Ascending aorta (tissue), 2 donors: ENCODE measurements at regions of chr2 and their contacts with region 1.

Region 1: DNA sequence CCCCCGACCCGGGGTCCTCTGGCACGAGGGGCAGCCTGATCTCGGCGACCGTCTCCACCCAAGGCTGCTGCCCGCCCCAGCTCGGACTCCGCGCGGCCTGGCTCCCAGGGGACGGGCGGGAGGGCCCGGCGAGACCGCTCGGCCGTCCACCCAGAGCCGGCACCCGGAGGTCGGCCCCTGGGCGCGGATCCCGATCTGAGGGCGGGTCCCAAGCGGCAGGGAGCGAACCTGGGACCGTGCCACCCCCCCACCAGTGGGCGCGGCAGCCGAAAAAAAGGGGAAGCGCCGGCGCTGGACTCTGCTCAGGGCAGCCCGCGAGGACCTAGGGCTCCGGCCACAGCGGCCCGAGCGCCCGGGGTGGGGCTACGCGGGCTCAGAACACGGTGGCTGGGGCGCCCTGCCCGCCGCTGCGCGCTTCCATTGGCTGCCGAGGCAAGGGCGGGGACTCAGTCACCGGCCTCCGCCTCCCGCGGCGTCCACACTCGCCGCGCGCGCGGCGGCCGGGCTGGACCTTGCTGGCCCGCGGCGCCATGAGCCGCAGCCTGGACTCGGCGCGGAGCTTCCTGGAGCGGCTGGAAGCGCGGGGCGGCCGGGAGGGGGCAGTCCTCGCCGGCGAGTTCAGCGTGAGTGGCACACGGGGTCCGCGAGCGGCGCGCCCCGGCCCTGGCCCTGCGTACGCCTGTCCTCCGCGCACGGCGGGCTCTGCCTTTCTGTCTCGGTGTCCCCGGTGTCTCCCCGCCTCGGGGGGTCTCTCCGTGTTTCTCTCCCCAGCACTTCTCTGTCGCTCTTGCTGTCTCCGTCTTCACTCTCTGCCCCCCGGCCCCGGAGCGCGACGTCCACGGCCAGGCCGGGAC is at the start of gene PTPN18:
- DNase-seq: peak; percentile 53 to 95
- H3K4me3 ChIP-seq: peak within 1 kb of the TSS; percentile 57 to 78
- H3K27ac ChIP-seq: peak within 1 kb of the TSS; percentile 58 to 74
- H3K4me1 ChIP-seq: peaks cover 6 to 15% of the 10 kb centered on the region in 2 donors
- H3K27me3 ChIP-seq: no peaks in the 10 kb centered on the region
- CTCF ChIP-seq: peak; percentile 43 to 79 (median 59)
- total RNA-seq, gene PTPN18: 21.0 TPM

Region 2: GRCh38 chr2:129877289-129877779 is 478.5 kb before region 1 on chr2:
- intact Hi-C with region 1: loop called (anchors 5 kb)
- DNase-seq: peak; percentile 81 to 95
- H3K4me3 ChIP-seq: peak overlapping the region; percentile 82 to 86
- H3K27ac ChIP-seq: peak overlapping the region; percentile 75 to 80
- H3K4me1 ChIP-seq: peaks cover 0 to 11% of the 10 kb centered on the region in 2 donors
- H3K27me3 ChIP-seq: no peaks in the 10 kb centered on the region
- CTCF ChIP-seq: no peak

Region 3: DNA sequence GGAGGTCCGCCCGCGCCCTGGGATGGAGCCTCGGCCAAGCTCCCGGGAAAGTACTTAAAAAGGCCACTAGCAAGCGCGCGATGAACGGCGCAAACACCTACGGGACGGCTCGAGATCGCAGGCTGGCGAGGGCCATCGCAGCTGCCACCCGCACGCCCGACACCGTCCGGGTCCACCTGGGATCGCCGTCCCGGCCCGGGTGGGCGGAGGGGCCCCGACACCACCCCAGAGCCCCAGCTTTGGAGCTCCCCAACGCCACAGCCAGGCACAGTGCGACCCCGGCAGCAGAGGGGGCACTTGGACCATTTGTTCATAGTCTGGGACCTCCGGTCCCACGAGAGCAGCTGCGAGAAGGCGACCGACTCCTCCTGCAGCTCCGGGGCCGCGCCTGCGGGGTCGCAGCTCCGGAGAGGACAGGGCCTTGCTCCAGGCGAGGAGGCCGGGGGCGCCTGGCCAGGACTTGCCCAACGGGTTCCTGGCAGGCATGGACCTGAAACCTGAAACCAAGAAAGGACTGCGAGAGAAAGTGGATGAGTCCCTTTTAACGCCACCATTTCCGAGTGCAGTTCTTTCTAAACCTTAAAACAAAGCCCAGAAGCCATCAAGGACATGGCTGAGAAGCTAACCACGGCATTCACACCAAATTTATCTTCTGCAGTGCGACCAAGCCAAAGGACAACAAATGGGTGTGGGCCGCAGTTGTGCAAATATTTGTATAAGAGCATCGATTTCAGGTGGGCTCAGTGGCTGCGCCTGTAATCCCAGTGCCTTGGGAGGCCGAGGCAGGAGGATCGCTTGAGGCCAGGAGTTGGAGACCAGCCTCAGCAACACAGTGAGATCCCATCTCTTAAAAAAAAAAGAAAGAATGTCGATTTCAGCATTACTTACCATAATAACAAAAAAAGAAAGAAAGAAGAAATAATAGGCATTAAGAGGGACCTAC is 67.1 kb before region 1 on chr2:
- intact Hi-C with region 1: no loop called
- DNase-seq: no peak
- H3K4me3 ChIP-seq: no peak overlapping the region
- H3K27ac ChIP-seq: no peak overlapping the region
- H3K4me1 ChIP-seq: no peaks in the 10 kb centered on the region
- H3K27me3 ChIP-seq: no peaks in the 10 kb centered on the region
- CTCF ChIP-seq: no peak

Region 4: GRCh38 chr2:130372055-130372832 is 16.4 kb after region 1 on chr2:
- intact Hi-C with region 1: loop called (anchors 1 kb)
- DNase-seq: peak; percentile 38 to 94
- H3K4me3 ChIP-seq: peak overlapping the region; percentile 82 to 94
- H3K27ac ChIP-seq: peak overlapping the region; percentile 73 to 89
- H3K4me1 ChIP-seq: peaks cover 0 to 16% of the 10 kb centered on the region in 2 donors
- H3K27me3 ChIP-seq: no peaks in the 10 kb centered on the region
- CTCF ChIP-seq: peak; percentile 86 to 93 (median 87)

Region 5: GRCh38 chr2:130727286-130728018 is 371.6 kb after region 1 on chr2:
- intact Hi-C with region 1: loop called (anchors 5 kb)
- DNase-seq: peak; percentile 46 to 91
- H3K4me3 ChIP-seq: peak overlapping the region; percentile 64 to 67
- H3K27ac ChIP-seq: peak overlapping the region; percentile 73 to 86
- H3K4me1 ChIP-seq: peaks cover 7 to 15% of the 10 kb centered on the region in 2 donors
- H3K27me3 ChIP-seq: no peaks in the 10 kb centered on the region
- CTCF ChIP-seq: no peak

Region 6: DNA sequence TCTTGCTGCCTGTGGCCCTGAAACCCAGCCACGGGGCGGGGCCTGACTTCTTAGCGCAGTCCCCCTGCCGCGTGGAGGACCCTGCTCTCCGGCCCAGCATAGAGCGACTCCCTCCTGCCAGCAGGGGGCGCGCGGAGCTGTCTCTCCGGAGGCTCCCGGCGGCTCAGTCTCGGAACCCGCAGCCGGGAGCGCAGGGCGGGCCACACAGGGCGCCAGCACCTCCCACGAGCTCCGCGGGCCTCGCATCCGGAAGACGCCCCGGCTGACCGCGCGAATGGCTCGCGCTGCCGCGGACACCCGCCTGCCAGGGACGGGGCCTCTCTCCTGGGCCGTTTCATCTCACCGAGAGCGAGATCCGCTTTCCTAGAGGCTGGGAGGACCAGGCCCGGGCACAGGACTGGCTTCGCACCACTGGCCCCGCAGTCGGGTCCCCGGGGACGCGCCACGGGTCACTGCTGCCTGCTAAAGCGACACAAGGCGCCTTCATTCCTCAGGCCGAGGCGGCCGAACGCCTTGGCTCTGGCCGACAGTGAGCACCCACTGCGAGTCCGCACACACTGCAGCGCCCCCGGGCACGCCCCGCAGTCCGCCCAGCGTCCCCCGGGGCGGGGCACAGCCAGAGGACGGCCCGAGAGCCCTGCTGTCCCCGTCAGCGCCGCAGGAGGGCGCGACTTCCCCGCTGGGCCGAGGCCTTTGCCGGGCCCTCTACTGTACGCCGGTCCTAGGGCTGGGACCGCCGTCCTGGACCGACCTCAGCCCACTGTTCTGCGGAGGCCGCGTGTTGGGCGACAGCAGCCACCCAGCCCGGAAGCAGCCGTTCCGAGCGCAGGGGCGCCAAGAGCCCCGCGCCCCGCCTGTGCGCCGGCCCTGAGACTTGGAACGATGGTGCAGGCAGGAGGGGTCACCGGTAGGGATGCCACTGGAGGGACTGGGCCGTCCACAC is 442.0 kb after region 1 on chr2:
- intact Hi-C with region 1: loop called (anchors 10 kb)
- DNase-seq: peak; percentile 39 to 93
- H3K4me3 ChIP-seq: peak overlapping the region; percentile 59 to 70
- H3K27ac ChIP-seq: peak overlapping the region; percentile 88 to 90
- H3K4me1 ChIP-seq: peaks cover 0 to 8% of the 10 kb centered on the region in 2 donors
- H3K27me3 ChIP-seq: no peaks in the 10 kb centered on the region
- CTCF ChIP-seq: peak; percentile 86 to 96 (median 95)

Region 7: DNA sequence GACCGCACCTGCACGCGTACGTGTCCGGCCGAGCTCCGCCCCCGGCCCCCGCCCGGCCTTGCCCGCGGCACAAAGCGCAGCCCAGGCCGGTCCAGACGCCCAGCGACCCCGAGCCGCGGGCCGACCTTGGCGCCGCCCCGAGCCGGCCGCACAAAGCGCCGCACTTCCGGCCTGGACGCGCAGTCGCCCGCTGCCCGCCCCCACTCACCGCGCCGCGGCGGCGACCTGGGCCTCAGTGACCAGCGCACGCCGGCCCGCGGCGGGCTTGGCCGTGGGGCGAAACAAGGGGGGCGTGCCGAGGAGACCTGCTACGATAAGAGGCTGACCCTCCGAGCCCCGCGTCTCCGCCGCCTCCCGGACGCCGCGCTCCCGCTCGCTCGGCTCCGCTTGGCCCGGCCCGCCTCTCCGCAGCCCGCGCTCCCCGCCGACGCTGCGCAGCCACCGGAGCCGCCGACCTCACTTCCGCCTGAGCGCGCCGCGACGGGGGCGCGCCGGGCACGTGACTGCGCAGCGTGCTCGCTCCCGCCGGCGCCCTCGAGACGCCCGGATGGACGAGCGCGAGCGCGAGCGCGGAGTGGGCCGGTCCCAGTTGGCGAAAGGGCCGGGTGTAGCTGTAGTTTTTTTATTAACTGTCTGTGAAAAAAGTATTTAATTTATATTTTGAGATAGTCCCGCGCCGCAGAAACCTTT is 737.3 kb after region 1 on chr2 and contains the start of gene FAM168B:
- intact Hi-C with region 1: loop called (anchors 5 kb)
- DNase-seq: peak; percentile 47 to 91
- H3K4me3 ChIP-seq: peak within 1 kb of the TSS; percentile 88 to 98
- H3K27ac ChIP-seq: peak within 1 kb of the TSS; percentile 88 to 98
- H3K4me1 ChIP-seq: peaks cover 0 to 15% of the 10 kb centered on the region in 2 donors
- H3K27me3 ChIP-seq: no peaks in the 10 kb centered on the region
- CTCF ChIP-seq: no peak
- total RNA-seq, gene FAM168B: 64.3 TPM

Region 8: GRCh38 chr2:131492418-131493198 is 1136.8 kb after region 1 on chr2:
- intact Hi-C with region 1: no loop called
- DNase-seq: peak; percentile 72 to 89
- H3K4me3 ChIP-seq: peak overlapping the region; percentile 87 to 98
- H3K27ac ChIP-seq: peak overlapping the region; percentile 77 to 86
- H3K4me1 ChIP-seq: peaks cover 2 to 6% of the 10 kb centered on the region in 2 donors
- H3K27me3 ChIP-seq: no peaks in the 10 kb centered on the region
- CTCF ChIP-seq: peak; percentile 38 to 77 (median 76)